ENCODE measurements at regions of chr2 and their contacts with region 1.

Region 1: DNA sequence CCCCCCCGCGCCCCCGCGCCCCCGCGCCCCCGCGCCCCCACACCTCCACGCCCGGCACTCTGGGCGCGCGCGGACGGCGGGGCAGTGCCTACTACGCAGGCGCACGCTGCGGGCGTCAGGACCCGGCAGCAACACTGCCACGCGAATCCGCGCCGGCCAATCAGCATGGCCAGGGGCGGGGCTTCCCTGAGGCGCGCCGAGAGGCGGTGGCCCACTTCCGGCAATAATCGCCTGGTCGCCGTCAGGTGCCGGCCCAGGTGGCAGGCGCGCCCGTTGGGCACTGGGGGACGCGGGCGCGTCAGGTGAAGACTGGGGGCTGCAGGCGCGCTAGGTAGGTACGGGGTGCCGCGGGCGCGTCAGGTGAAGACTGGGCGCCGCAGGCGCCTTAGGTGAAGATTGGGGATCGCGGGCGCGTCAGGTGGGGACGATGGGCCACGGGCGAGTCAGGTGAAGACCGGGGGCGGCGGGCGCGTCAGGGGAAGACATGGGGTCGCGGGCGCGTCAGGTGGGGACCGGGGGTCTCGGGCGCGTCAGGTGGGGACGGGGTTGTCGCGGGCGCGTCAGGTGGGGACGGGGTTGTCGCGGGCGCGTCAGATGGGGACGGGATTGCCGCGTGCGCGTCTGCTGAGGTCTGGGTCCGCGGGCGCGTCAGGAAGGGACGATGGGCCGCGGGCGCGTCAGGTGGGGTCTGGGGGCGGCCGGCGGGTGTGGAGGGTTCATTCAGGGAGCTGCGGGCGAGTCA is 219.1 kb downstream of the RTP5 start:
- DNase-seq: peak; percentile 84 to 96 (median 92)
- ATAC-seq: peak; percentile 95
- H3K4me3 ChIP-seq: peak overlapping the region; percentile 59
- H3K4me3 Mint-ChIP-seq: peak overlapping the region; percentile 97
- H3K27ac ChIP-seq: no peak overlapping the region
- H3K27ac Mint-ChIP-seq: peak overlapping the region; percentile 97
- H3K4me1 ChIP-seq: peaks cover 26% of the 10 kb centered on the region
- H3K4me1 Mint-ChIP-seq: peaks cover 33% of the 10 kb centered on the region
- H3K27me3 ChIP-seq: no peaks in the 10 kb centered on the region
- H3K27me3 Mint-ChIP-seq: no peaks in the 10 kb centered on the region
- CTCF ChIP-seq: no peak

Region 2: GRCh38 chr2:240170356-240171282 is 1918.0 kb before region 1 on chr2:
- CTCF ChIA-PET with region 1: no interaction called
- POLR2A ChIA-PET with region 1: no interaction called
- intact Hi-C with region 1: no loop called
- DNase-seq: no peak
- ATAC-seq: no peak
- H3K4me3 ChIP-seq: no peak overlapping the region
- H3K4me3 Mint-ChIP-seq: no peak overlapping the region
- H3K27ac ChIP-seq: no peak overlapping the region
- H3K27ac Mint-ChIP-seq: no peak overlapping the region
- H3K4me1 ChIP-seq: no peaks in the 10 kb centered on the region
- H3K4me1 Mint-ChIP-seq: no peaks in the 10 kb centered on the region
- H3K27me3 ChIP-seq: peaks cover 0 to 12% of the 10 kb centered on the region in 2 experiments
- H3K27me3 Mint-ChIP-seq: peaks cover 6% of the 10 kb centered on the region
- CTCF ChIP-seq: no peak

Region 3: DNA sequence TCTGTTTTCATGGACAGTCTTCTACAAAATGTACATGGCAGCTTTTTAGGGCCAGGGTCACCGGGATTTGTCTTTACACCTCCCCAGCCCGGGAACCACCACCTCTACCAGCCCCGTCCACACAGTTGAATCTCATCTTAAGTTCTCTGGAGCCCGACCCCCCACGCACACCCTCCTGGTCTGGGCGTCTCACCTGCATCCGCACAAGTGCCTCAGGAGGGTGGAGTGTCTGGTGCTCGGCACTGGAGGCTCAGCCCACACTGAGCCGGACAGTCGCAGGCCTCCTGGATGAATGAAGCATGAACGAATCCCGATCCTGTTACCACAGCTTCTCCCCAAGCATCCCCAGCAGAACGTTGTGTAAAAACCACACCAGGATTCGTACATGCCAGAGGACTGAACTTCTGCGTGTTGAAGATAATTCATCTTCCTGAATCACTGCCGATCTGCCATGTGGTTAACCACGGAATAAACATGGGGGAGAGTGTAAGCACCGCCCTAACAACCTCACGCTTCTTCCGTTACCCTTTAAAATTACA is 57.1 kb before region 1 on chr2:
- CTCF ChIA-PET with region 1: no interaction called
- POLR2A ChIA-PET with region 1: no interaction called
- intact Hi-C with region 1: loop called (anchors 2 to 5 kb)
- DNase-seq: peak; percentile 26 to 86 (median 62)
- ATAC-seq: peak; percentile 92
- H3K4me3 ChIP-seq: peak overlapping the region; percentile 66
- H3K4me3 Mint-ChIP-seq: peak overlapping the region; percentile 87
- H3K27ac ChIP-seq: peak overlapping the region; percentile 2 to 54
- H3K27ac Mint-ChIP-seq: peak overlapping the region; percentile 95
- H3K4me1 ChIP-seq: peaks cover 45% of the 10 kb centered on the region
- H3K4me1 Mint-ChIP-seq: peaks cover 54% of the 10 kb centered on the region
- H3K27me3 ChIP-seq: peaks cover 0 to 2% of the 10 kb centered on the region in 2 experiments
- H3K27me3 Mint-ChIP-seq: no peaks in the 10 kb centered on the region
- CTCF ChIP-seq: no peak